ENCODE measurements at regions of chr2 and their contacts with region 1.

Region 1: DNA sequence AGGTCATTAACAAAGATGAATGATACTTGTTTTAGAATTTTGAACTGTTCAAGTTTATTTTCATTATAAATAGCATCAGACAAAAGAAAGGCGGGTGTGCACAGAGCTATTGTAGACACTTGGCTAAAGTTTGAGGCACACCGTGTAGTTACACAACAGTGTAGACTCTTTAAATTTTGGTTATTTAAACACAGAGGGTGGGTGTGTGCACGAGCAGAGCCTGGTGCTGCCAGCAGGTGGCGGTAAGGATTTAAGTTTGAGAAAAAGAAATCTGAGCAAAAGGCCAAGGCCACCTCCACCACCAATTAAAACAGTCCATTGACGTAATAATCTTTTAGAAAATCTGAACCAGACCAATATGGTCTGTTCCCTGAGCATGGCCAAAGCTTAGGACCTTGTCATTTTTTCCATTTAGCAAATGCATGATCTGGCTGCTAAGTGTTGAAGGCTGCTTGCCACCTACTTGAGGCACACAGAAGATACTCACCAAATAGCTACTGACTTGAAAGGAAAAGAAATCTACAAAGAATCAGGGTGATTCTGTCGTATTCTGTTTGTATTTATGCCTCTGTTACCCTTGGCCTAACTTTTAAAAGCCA is 14.3 kb downstream of the COPS7B start:
- DNase-seq: no peak
- H3K4me3 ChIP-seq: no peak overlapping the region
- H3K27ac ChIP-seq: no peak overlapping the region
- H3K27me3 ChIP-seq: no peaks in the 10 kb centered on the region
- CTCF ChIP-seq: peak; percentile 73

Region 2: GRCh38 chr2:231786177-231786916 is 14.2 kb before region 1 on chr2 and contains the start of gene COPS7B:
- CTCF ChIA-PET with region 1: interaction called, 14 read pairs
- POLR2A ChIA-PET with region 1: no interaction called
- DNase-seq: peak; percentile 61
- H3K4me3 ChIP-seq: peak within 1 kb of the TSS; percentile 99
- H3K27ac ChIP-seq: peak within 1 kb of the TSS; percentile 52
- H3K27me3 ChIP-seq: no peaks in the 10 kb centered on the region
- CTCF ChIP-seq: peak; percentile 47
- polyA plus RNA-seq, gene COPS7B: 47.2 and 49.2 TPM in 2 replicates

Region 3: GRCh38 chr2:231810905-231811304 is 10.3 kb after region 1 on chr2:
- CTCF ChIA-PET with region 1: interaction called, 24 read pairs
- POLR2A ChIA-PET with region 1: no interaction called
- DNase-seq: peak; percentile 46
- H3K4me3 ChIP-seq: no peak overlapping the region
- H3K27ac ChIP-seq: peak overlapping the region; percentile 52
- H3K27me3 ChIP-seq: no peaks in the 10 kb centered on the region
- CTCF ChIP-seq: no peak

Region 4: DNA sequence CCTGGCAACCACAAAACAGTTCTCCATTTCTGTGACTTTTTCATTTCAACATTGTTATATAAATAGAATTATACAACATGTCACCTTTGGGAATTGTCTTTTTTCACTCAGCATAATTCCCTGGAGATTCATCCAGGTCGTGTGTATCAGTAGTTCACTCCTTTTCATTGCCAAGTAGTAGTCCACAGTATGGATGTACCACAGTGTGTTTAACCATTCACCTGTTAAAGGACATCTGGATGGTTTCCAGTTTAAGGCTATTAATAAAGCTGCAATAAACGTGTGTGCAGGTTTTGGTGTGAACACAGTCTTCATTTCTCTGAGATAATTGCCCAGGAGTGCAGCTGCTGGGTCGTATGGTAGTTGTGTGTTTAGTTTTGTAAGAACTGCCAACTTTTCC is 21.3 kb after region 1 on chr2:
- CTCF ChIA-PET with region 1: no interaction called
- POLR2A ChIA-PET with region 1: no interaction called
- DNase-seq: no peak
- H3K4me3 ChIP-seq: no peak overlapping the region
- H3K27ac ChIP-seq: no peak overlapping the region
- H3K27me3 ChIP-seq: no peaks in the 10 kb centered on the region
- CTCF ChIP-seq: no peak

Region 5: GRCh38 chr2:232075080-232075479 is 274.5 kb after region 1 on chr2:
- CTCF ChIA-PET with region 1: no interaction called
- POLR2A ChIA-PET with region 1: no interaction called
- DNase-seq: no peak
- H3K4me3 ChIP-seq: no peak overlapping the region
- H3K27ac ChIP-seq: no peak overlapping the region
- H3K27me3 ChIP-seq: no peaks in the 10 kb centered on the region
- CTCF ChIP-seq: no peak

Measured in AG04450 (cell line).